ENCODE measurements at regions of chr19 and their contacts with region 1.

Region 1: DNA sequence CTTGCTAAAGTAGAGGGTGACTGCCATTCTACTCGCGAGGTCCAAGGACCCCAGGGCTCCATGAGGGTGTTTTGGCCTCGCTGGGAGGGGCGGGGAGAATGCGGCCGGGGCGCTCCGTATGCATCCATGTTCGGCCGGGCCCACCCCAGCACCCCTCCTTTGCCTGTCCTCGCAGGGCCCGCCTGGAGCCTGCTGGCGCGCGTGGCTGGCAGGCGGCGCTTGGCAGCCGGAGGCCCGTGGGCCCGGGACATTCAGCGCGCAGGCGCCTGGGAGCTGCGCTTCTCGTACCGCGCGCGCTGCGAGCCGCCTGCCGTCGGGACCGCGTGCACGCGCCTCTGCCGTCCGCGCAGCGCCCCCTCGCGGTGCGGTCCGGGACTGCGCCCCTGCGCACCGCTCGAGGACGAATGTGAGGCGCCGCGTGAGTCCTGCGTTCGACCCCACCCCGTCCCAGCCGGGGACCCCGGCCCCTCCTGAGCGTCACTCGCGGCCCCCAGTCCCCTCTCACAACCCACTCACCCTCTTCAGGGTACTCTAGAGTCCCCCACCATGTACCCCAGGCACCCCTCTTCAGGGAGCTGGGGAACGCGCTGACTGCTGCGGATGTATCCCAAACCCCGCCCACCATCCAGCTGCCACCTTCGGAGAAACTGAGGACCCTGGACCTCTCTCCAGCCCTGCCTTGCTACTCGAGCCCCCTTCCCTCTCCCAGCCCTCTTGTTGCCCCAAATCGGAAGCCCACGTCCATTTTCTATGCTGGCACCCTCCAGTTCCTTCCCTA is 4.1 kb downstream of the DLL3 start:
- DNase-seq: peak; percentile 95
- H3K4me3 Mint-ChIP-seq: peak overlapping the region; percentile 42
- H3K27ac Mint-ChIP-seq: no peak overlapping the region
- H3K4me1 Mint-ChIP-seq: peaks cover 29% of the 10 kb centered on the region
- H3K27me3 Mint-ChIP-seq: peaks cover 63% of the 10 kb centered on the region

Region 2: GRCh38 chr19:39480337-39481228 is 22.2 kb before region 1 on chr19 and contains the start of gene TIMM50:
- intact Hi-C with region 1: loop called (anchors 2 kb)
- DNase-seq: peak; percentile 99
- H3K4me3 Mint-ChIP-seq: peak within 1 kb of the TSS; percentile 92
- H3K27ac Mint-ChIP-seq: peak within 1 kb of the TSS; percentile 94
- H3K4me1 Mint-ChIP-seq: peaks cover 21% of the 10 kb centered on the region
- H3K27me3 Mint-ChIP-seq: no peaks in the 10 kb centered on the region
- total RNA-seq, gene TIMM50: 141 and 143 TPM in 2 replicates